CD14-positive monocyte (primary cell): ENCODE measurements at regions of chr15 and their contacts with region 1.

Region 1: DNA sequence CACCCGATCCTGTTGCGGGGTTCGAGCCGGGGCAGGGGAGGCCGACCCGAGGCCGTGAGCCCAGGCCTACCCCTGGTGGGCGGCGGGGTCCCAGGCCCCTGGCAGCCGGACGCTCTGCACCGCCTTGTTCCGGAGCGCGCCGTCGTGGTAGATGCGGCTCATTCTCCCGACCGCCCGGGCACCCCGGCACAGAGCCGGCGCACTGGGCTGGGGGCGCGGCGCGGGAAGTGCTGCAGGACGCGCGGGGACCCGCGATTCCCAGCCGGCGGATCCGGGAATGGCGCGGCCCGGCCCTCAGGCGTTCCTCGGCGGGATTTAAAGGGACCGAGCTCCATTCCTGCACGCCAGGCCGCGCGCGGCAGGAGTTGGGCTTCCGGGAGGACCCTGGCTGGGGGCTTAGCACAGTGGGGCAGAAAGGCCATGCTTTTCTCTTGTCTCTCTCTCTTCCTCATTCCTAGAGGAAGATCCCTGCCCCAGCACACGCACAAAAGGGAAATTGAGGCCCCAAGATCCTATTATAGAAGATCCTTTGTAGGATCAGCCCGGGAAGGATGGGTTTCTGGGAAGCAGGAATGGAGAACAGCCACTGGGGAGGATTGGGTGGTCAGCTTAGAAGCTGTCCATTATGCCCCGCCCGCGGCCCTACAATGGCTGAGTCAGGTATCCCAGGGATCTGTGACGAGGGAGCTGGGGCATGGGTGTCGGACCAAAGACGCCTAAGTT is at the start of gene ARPIN:
- DNase-seq: peak in 2 of 3 donors; percentile 9 to 17
- H3K4me3 ChIP-seq: peak within 1 kb of the TSS; percentile 47 to 87 (median 77)
- H3K4me3 Mint-ChIP-seq: peak within 1 kb of the TSS; percentile 91 to 96
- H3K27ac ChIP-seq: peak within 1 kb of the TSS; percentile 9 to 79
- H3K27ac Mint-ChIP-seq: peak within 1 kb of the TSS; percentile 74 to 91 (median 90)
- H3K4me1 ChIP-seq: peaks cover 35 to 37% of the 10 kb centered on the region in 2 donors
- H3K4me1 Mint-ChIP-seq: peaks cover 39% of the 10 kb centered on the region
- H3K27me3 ChIP-seq: peaks cover 0 to 8% of the 10 kb centered on the region in 2 donors
- H3K27me3 Mint-ChIP-seq: peaks cover 3 to 25% (median 9%) of the 10 kb centered on the region in 3 donors
- CTCF ChIP-seq: no peak
- polyA plus RNA-seq, gene ARPIN: 9.7 to 19.3 (median 14.0) TPM

Region 2: GRCh38 chr15:89654847-89655805 is 257.7 kb before region 1 on chr15 and contains the start of gene KIF7:
- intact Hi-C with region 1: no loop called
- DNase-seq: no peak
- H3K4me3 ChIP-seq: peak within 1 kb of the TSS in 1 of 3 experiments; percentile 60
- H3K4me3 Mint-ChIP-seq: peak within 1 kb of the TSS; percentile 54 to 93
- H3K27ac ChIP-seq: no peak within 1 kb of the TSS
- H3K27ac Mint-ChIP-seq: peak within 1 kb of the TSS in 1 of 7 donors; percentile 50
- H3K4me1 ChIP-seq: peaks cover 7 to 14% of the 10 kb centered on the region in 2 donors
- H3K4me1 Mint-ChIP-seq: peaks cover 14% of the 10 kb centered on the region
- H3K27me3 ChIP-seq: peaks cover 30 to 36% of the 10 kb centered on the region in 2 donors
- H3K27me3 Mint-ChIP-seq: peaks cover 28 to 53% (median 44%) of the 10 kb centered on the region in 3 donors
- CTCF ChIP-seq: no peak
- polyA plus RNA-seq, gene KIF7: not detected

Region 3: GRCh38 chr15:89964232-89964954 is 51.6 kb after region 1 on chr15:
- intact Hi-C with region 1: loop called in 1 of 2 experiments (anchors 5 kb)
- DNase-seq: no peak
- H3K4me3 ChIP-seq: no peak overlapping the region
- H3K4me3 Mint-ChIP-seq: no peak overlapping the region
- H3K27ac ChIP-seq: peak overlapping the region in 1 of 2 donors; percentile 62
- H3K27ac Mint-ChIP-seq: peak overlapping the region in 6 of 7 donors; percentile 35 to 82 (median 53)
- H3K4me1 ChIP-seq: peaks cover 39 to 42% of the 10 kb centered on the region in 2 donors
- H3K4me1 Mint-ChIP-seq: peaks cover 54% of the 10 kb centered on the region
- H3K27me3 ChIP-seq: no peaks in the 10 kb centered on the region
- H3K27me3 Mint-ChIP-seq: no peaks in the 10 kb centered on the region
- CTCF ChIP-seq: no peak